ENCODE measurements at regions of chr15 and their contacts with region 1.

Region 1: DNA sequence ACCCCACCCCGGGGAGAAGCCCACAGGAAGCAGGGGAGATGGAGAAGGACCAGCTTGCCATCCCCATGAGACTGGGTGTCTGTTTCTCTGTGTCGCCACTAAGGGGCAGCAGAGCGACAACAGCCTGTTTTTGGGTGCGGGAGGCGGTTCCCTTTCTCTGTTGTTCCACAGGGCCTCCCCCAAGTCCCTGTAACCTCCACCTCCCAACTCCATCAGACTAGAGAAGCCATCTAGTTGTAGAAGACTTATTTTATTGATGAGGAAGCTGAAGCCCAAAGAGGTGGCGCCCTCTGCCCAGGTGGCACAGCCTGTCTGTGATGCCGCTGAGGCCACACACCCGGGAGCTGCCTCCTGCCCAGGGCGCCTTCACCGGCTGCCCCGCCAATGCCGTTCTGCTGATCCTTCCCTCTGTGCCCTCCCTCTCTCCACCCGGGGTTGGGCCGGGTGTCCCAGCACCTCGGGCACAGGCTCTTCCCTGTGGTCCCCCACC is 3.9 kb upstream of the CCDC9B start:
- DNase-seq: peak; percentile 77
- H3K4me3 Mint-ChIP-seq: no peak overlapping the region
- H3K27ac Mint-ChIP-seq: no peak overlapping the region
- H3K4me1 Mint-ChIP-seq: peaks cover 3% of the 10 kb centered on the region
- H3K27me3 Mint-ChIP-seq: no peaks in the 10 kb centered on the region

Region 2: GRCh38 chr15:40226736-40227135 is 117.9 kb before region 1 on chr15:
- CTCF ChIA-PET with region 1: no interaction called
- POLR2A ChIA-PET with region 1: no interaction called
- DNase-seq: no peak
- H3K4me3 Mint-ChIP-seq: no peak overlapping the region
- H3K27ac Mint-ChIP-seq: no peak overlapping the region
- H3K4me1 Mint-ChIP-seq: peaks cover 19% of the 10 kb centered on the region
- H3K27me3 Mint-ChIP-seq: no peaks in the 10 kb centered on the region

Region 3: GRCh38 chr15:40330368-40330836 is 14.3 kb before region 1 on chr15:
- CTCF ChIA-PET with region 1: interaction called, 84 read pairs
- POLR2A ChIA-PET with region 1: interaction called, 3 read pairs
- DNase-seq: no peak
- H3K4me3 Mint-ChIP-seq: no peak overlapping the region
- H3K27ac Mint-ChIP-seq: no peak overlapping the region
- H3K4me1 Mint-ChIP-seq: peaks cover 34% of the 10 kb centered on the region
- H3K27me3 Mint-ChIP-seq: peaks cover 2% of the 10 kb centered on the region

Region 4: GRCh38 chr15:40357723-40358470 is 13.2 kb after region 1 on chr15 and contains the start of gene DISP2:
- CTCF ChIA-PET with region 1: interaction called, 30 read pairs
- POLR2A ChIA-PET with region 1: interaction called, 3 read pairs
- DNase-seq: peak; percentile 93
- H3K4me3 Mint-ChIP-seq: peak within 1 kb of the TSS; percentile 72
- H3K27ac Mint-ChIP-seq: no peak within 1 kb of the TSS
- H3K4me1 Mint-ChIP-seq: peaks cover 11% of the 10 kb centered on the region
- H3K27me3 Mint-ChIP-seq: peaks cover 18% of the 10 kb centered on the region
- total RNA-seq, gene DISP2: 0.03 to 0.18 TPM

Region 5: DNA sequence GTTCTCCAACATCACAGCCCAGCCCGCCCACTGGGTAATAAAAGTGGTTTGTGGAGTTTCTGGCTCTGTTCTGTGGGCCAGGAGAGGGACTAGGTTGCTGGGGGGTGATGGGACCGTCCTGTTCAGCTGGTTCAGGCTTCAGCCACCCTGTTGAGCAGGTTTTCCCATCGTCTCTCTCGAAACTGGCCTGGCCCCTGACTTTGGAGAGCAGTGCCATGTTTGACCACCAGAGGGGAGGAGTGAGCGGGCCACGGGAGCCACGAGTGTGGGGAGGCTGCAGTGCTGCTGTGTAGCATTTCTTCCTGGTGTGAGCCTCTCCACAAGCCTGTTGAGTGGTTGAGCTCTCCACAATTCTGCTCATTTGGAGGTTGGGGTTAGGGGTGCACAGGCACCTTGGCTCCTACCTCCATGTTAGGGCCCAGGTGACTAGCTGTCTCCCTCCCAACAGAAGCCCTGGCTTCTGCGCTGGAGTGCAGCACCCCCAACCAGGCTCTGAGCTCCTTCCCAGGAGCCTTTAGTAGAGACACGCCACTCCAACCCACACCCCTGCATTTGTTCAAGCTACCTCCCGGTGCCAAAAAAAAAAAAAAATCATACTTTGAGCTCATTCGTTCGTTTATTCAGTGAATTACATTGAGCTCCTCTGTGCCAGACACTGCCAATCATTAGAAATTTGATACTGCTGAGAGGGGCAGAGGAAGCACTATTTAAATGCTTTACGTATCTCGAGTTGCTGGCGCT is 513.1 kb after region 1 on chr15:
- CTCF ChIA-PET with region 1: no interaction called
- POLR2A ChIA-PET with region 1: no interaction called
- DNase-seq: peak; percentile 84
- H3K4me3 Mint-ChIP-seq: no peak overlapping the region
- H3K27ac Mint-ChIP-seq: no peak overlapping the region
- H3K4me1 Mint-ChIP-seq: peaks cover 18% of the 10 kb centered on the region
- H3K27me3 Mint-ChIP-seq: no peaks in the 10 kb centered on the region